ENCODE measurements at regions of chr19 and their contacts with region 1.

Region 1: DNA sequence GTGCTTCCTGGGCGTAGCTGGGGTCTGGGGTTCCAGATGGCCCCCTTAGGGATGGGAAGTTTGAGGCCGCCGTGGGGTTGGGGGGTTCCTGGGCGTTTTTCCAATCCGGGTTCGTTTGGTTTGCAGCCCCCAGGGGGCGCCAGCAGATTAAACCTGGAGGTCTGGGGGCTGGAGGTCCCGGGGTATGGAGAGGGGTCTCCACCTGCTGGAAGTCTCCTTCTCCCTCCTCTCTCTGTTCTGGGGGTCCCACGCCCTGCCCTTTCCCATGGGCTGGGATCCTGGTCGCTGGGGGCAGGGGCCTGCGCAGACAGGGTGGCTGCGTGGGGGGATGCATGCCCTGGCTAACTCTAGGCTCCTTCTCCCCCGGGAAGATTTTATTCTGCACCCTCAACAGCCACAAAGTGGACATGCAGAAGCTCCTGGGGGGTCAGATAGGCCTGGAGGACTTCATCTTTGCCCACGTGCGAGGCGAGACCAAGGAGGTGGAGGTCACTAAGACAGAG is 897 bp downstream of the GIPC3 start:
- DNase-seq: peak; percentile 89
- H3K4me3 ChIP-seq: no peak overlapping the region
- H3K27ac ChIP-seq: no peak overlapping the region
- H3K4me1 ChIP-seq: peaks cover 0 to 7% of the 10 kb centered on the region in 2 experiments; a peak in 1 of 4 replicates
- H3K27me3 ChIP-seq: no peaks in the 10 kb centered on the region
- CTCF ChIP-seq: peak; percentile 71
- EP300 ChIP-seq: no peak
- RAD21 ChIP-seq: peak; percentile 65

Region 2: DNA sequence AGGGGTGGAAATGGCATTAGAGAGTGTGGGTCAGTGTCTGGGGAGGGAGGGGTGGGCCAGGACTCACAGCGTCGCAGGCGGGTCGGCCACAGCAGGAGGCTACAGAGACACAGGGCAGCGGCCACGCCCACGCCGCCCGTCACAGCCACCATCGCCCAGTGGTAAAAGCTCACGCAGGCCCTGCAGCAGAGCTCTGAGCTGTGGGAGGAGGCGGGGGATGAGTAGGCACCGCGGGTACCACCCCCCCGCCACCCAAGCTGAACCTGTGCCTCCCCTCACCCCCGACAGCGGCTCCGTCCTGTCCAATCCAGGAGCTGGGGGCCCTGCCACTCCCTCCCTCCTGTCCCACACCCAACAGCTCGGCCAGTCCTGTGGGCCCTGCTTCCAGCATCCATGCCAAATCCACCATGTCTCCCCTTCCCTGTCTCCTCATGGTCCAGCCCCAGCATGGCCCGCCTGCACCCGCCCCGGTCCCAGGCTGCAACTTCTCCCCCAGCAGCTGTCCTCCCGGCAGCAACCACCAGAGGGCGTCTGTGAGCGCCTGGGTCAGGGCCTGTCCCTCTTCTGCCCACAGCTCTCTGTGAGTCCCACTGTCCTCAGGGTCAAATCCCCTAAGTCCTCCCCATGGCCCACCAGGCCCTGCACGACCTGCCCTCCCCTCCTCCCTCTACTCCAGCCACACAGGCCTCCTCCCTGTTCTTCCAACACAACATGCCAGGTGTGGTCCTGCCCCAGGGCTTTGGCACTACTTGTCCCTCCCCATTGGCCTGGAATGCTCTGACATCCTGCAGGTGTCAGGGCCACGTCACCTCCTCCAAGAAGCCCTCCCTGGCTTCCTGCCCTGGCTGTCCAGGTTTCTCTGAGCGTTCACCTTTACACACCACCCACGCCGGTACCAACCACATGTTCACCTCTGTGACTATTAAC is 41.2 kb before region 1 on chr19:
- CTCF ChIA-PET with region 1: interaction called, 20 read pairs
- POLR2A ChIA-PET with region 1: no interaction called
- DNase-seq: peak; percentile 94
- H3K4me3 ChIP-seq: no peak overlapping the region; a peak in 1 of 4 replicates
- H3K27ac ChIP-seq: no peak overlapping the region
- H3K4me1 ChIP-seq: no peaks in the 10 kb centered on the region; a peak in 1 of 4 replicates
- H3K27me3 ChIP-seq: no peaks in the 10 kb centered on the region
- CTCF ChIP-seq: peak; percentile 88
- EP300 ChIP-seq: no peak
- RAD21 ChIP-seq: peak; percentile 63

Region 3: DNA sequence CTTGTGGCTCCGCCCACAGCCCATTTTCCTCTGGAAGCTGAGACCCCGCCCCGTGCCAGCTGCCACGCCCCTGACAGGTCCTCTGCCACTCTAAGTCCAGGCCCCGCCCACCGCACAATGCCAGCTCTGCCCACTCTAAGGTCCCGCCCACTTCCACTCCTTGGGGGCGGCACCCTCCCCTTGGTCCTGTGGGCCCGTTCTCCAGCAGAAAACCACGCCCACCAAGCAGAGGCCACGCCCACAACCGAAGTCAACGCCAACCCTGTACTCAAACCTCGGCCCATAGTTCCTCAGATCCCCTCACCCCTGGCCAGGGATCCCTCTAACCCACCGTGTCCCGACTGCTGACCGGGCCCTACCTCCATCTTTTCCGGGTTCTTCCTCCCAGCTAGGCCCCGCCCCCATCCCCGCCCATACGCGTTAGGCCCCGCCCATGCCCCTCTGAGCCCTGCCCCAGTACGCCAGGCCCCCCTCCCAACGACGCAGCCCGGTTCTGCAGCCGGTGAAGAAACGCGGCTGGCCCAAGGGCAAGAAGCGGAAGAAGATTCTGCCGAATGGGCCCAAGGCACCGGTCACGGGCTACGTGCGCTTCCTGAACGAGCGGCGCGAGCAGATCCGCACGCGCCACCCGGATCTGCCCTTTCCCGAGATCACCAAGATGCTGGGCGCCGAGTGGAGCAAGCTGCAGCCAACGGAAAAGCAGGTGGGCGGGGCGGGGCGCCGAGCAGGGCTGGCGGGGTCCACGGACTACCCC is 12.1 kb before region 1 on chr19:
- CTCF ChIA-PET with region 1: interaction called, 38 read pairs
- POLR2A ChIA-PET with region 1: interaction called, 3 read pairs
- DNase-seq: peak; percentile 98
- H3K4me3 ChIP-seq: peak overlapping the region; percentile 91 to 92
- H3K27ac ChIP-seq: peak overlapping the region; percentile 67 to 72; a peak in 3 of 4 replicates
- H3K4me1 ChIP-seq: peaks cover 0 to 5% of the 10 kb centered on the region in 2 experiments; a peak in 1 of 4 replicates
- H3K27me3 ChIP-seq: no peaks in the 10 kb centered on the region
- CTCF ChIP-seq: no peak
- EP300 ChIP-seq: no peak
- RAD21 ChIP-seq: no peak

Region 4: GRCh38 chr19:3607303-3608078 is 21.3 kb after region 1 on chr19:
- CTCF ChIA-PET with region 1: interaction called, 13 read pairs
- POLR2A ChIA-PET with region 1: interaction called, 4 read pairs
- DNase-seq: peak; percentile 71
- H3K4me3 ChIP-seq: peak overlapping the region; percentile 52 to 73
- H3K27ac ChIP-seq: peak overlapping the region; percentile 33 to 36; a peak in 2 of 4 replicates
- H3K4me1 ChIP-seq: peaks cover 8 to 14% of the 10 kb centered on the region in 2 experiments; a peak in 1 of 4 replicates
- H3K27me3 ChIP-seq: no peaks in the 10 kb centered on the region
- CTCF ChIP-seq: no peak
- EP300 ChIP-seq: no peak
- RAD21 ChIP-seq: no peak

Region 5: DNA sequence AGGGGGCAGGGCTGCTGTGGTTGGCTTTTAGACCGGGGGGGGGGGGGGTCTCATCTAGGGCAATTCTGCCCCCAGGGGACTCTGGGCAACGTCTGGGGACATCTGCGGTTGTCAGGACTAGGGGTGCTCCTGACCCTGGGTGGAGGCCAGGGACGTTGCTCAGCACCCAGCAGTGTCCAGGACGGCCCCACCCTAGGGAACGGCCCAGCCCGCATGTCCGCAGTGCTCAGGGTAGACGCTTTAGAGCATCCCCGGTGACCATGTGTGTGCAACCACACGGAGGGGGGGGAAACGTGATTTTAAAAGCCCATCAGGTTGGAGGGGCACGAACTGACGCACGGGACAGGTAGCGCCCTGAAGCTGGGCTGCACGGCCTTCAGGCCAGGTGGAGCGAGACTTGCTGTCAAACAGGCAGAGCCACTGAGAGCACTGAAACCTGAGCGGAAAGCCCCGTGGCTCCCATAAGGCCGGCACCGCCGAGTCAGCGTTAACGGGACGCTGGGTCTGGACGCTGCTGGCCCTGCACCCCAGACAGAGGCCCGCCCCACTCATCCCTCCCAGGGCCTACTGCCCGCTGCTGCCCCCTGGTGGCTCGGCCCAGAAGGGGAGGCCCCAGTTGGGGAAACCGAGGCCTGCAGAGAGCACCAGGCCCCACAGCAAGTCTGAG is 32.1 kb after region 1 on chr19:
- CTCF ChIA-PET with region 1: interaction called, 49 read pairs
- POLR2A ChIA-PET with region 1: no interaction called
- DNase-seq: peak; percentile 98
- H3K4me3 ChIP-seq: no peak overlapping the region; a peak in 1 of 4 replicates
- H3K27ac ChIP-seq: no peak overlapping the region
- H3K4me1 ChIP-seq: peaks cover 0 to 3% of the 10 kb centered on the region in 2 experiments; a peak in 1 of 4 replicates
- H3K27me3 ChIP-seq: no peaks in the 10 kb centered on the region
- CTCF ChIP-seq: peak; percentile 88
- EP300 ChIP-seq: no peak
- RAD21 ChIP-seq: peak; percentile 70